Vagina (tissue), 2 donors: ENCODE measurements at regions of chr2 and their contacts with region 1.

Region 1: GRCh38 chr2:19362755-19363473 is 4.5 kb upstream of the OSR1 start:
- DNase-seq: peak in 1 of 2 donors; percentile 89
- H3K4me3 ChIP-seq: peak overlapping the region; percentile 55 to 67
- H3K27ac ChIP-seq: peak overlapping the region; percentile 51
- H3K4me1 ChIP-seq: peaks cover 22% of the 10 kb centered on the region
- H3K27me3 ChIP-seq: no peaks in the 10 kb centered on the region
- CTCF ChIP-seq: peak; percentile 26 to 79 (median 73)
- POLR2A ChIP-seq: no peak

Region 2: DNA sequence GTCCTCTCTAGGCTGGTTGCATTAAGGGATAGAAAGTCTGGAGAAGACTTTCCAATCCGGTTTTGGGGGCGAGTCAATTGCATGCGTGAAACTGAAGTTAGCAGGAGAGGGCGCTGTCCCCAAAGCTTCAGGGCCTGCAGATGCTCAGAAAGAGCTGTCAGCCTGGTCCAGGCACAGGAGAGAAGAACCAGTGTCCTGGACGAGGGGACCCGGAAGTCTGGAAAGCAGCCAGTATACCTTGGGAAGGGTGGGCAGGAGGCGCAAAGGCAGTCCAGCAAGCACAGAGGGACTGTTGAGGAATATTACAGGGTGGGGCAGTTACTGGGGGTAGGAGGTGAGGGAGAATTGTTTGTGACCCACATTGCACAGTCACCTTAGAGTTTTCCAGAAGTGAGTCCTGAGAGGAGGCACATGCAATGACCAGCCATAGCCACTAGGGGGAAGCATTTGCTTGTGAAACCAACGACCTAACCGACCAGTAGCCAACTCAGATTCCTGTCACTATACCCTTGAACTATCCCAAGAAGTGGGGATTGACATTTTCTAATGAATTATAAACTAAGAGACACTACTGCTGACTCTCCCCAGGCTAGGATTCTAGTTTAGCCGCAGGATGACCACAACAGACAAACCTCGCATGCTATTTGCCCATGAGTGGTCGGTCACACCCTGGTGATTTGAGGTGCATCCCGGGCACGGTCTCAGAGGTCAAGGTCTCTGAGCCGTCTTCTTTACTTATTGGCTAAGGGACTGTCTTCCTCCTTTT is 975.3 kb before region 1 on chr2:
- intact Hi-C with region 1: loop called (anchors 5 kb)
- DNase-seq: no peak
- H3K4me3 ChIP-seq: no peak overlapping the region
- H3K27ac ChIP-seq: no peak overlapping the region
- H3K4me1 ChIP-seq: no peaks in the 10 kb centered on the region
- H3K27me3 ChIP-seq: no peaks in the 10 kb centered on the region
- CTCF ChIP-seq: peak; percentile 70 to 86 (median 82)
- POLR2A ChIP-seq: no peak

Region 3: GRCh38 chr2:18435421-18436037 is 927.4 kb before region 1 on chr2:
- intact Hi-C with region 1: loop called (anchors 10 kb)
- DNase-seq: no peak
- H3K4me3 ChIP-seq: no peak overlapping the region
- H3K27ac ChIP-seq: no peak overlapping the region
- H3K4me1 ChIP-seq: peaks cover 8% of the 10 kb centered on the region
- H3K27me3 ChIP-seq: no peaks in the 10 kb centered on the region
- CTCF ChIP-seq: peak in 2 of 3 experiments; percentile 33 to 35
- POLR2A ChIP-seq: no peak

Region 4: GRCh38 chr2:18749912-18750526 is 612.9 kb before region 1 on chr2:
- intact Hi-C with region 1: loop called (anchors 2 kb)
- DNase-seq: no peak
- H3K4me3 ChIP-seq: no peak overlapping the region
- H3K27ac ChIP-seq: no peak overlapping the region
- H3K4me1 ChIP-seq: no peaks in the 10 kb centered on the region
- H3K27me3 ChIP-seq: no peaks in the 10 kb centered on the region
- CTCF ChIP-seq: peak; percentile 47 to 74 (median 49)
- POLR2A ChIP-seq: no peak

Region 5: DNA sequence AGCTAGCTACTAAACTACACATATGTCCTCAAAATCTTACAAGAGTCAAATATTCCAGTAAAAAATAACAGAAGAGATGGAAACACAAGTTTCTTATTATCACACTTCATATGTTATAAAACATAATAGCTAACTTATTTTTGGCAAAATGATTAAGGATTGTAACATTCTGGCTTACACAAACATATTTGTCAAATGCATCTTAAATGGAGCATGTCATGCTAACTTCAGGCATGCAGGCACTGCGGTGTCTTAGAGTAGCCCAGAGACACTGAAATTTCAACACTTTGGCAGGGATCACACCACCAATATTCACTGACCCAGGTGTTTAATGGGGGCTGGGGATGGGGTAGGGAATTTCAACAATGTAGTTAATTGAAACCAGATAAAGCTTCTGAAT is 1408.4 kb after region 1 on chr2:
- intact Hi-C with region 1: no loop called
- DNase-seq: no peak
- H3K4me3 ChIP-seq: no peak overlapping the region
- H3K27ac ChIP-seq: no peak overlapping the region
- H3K4me1 ChIP-seq: no peaks in the 10 kb centered on the region
- H3K27me3 ChIP-seq: no peaks in the 10 kb centered on the region
- CTCF ChIP-seq: no peak
- POLR2A ChIP-seq: no peak